CD8-positive, alpha-beta T cell (primary cell): ENCODE measurements at regions of chr6 and their contacts with region 1.

Region 1: GRCh38 chr6:33430991-33431879 is 11.4 kb downstream of the SYNGAP1 start:
- DNase-seq: peak; percentile 77 to 93 (median 88)
- ATAC-seq: peak; percentile 59
- H3K4me3 ChIP-seq: peak overlapping the region; percentile 38 to 53
- H3K4me3 Mint-ChIP-seq: peak overlapping the region; percentile 93
- H3K27ac ChIP-seq: peak overlapping the region; percentile 53 to 81
- H3K27ac Mint-ChIP-seq: peak overlapping the region; percentile 94
- H3K4me1 ChIP-seq: peaks cover 56% of the 10 kb centered on the region
- H3K4me1 Mint-ChIP-seq: peaks cover 64% of the 10 kb centered on the region
- H3K27me3 ChIP-seq: no peaks in the 10 kb centered on the region
- H3K27me3 Mint-ChIP-seq: no peaks in the 10 kb centered on the region
- CTCF ChIP-seq: no peak

Region 2: DNA sequence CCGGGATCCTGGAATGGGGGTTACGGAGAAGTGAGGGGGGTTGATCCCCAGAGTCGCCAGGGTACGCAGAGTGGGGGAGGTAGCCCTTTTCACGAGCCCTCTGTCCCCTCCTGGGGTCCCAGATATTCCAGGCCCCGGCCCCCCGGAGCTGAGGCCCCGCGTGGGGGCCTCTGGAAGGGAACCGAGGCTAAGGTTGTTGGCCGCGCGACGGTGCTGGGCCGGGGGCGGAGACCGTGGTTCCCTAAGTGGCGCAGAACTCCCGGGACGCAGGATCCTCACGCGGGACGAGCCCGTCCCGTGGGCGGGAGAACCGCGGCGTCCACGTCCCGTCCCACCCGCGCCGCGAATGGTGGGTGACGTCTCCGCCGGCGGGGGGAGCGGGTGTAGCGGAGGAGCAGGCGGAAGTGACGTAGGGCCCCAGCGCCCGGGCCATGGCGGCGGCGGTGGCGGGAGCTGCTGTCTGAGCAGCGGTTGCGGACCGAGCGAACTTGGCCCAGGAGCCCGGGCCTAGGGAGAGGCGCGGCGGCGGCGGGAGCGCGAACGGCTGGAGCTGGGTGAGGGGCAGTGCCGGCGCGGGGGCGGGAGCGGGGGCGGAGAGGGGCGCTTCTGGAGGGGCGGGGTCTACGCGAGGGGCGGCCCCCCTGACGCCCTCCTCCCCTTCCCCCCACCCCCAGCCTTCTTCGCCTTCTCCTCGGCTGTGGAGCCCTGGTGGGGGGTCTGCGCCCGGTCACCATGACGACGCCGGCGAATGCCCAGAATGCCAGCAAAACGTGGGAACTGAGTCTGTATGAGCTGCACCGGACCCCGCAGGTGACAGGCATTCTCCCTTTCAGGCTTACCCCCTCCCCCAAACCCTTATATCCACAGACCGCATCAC is 222.9 kb before region 1 on chr6 and contains the start of gene RING1:
- CTCF ChIA-PET with region 1: no interaction called
- POLR2A ChIA-PET with region 1: no interaction called
- intact Hi-C with region 1: no loop called
- DNase-seq: peak; percentile 72 to 94 (median 87)
- ATAC-seq: peak; percentile 59
- H3K4me3 ChIP-seq: peak within 1 kb of the TSS; percentile 96 to 97
- H3K4me3 Mint-ChIP-seq: peak within 1 kb of the TSS; percentile 94
- H3K27ac ChIP-seq: peak within 1 kb of the TSS; percentile 91 to 98
- H3K27ac Mint-ChIP-seq: peak within 1 kb of the TSS; percentile 96
- H3K4me1 ChIP-seq: peaks cover 51% of the 10 kb centered on the region
- H3K4me1 Mint-ChIP-seq: peaks cover 57% of the 10 kb centered on the region
- H3K27me3 ChIP-seq: peaks cover 0 to 6% of the 10 kb centered on the region in 2 experiments
- H3K27me3 Mint-ChIP-seq: no peaks in the 10 kb centered on the region
- CTCF ChIP-seq: no peak
- total RNA-seq, gene RING1: 29.1 to 29.5 TPM

Region 3: DNA sequence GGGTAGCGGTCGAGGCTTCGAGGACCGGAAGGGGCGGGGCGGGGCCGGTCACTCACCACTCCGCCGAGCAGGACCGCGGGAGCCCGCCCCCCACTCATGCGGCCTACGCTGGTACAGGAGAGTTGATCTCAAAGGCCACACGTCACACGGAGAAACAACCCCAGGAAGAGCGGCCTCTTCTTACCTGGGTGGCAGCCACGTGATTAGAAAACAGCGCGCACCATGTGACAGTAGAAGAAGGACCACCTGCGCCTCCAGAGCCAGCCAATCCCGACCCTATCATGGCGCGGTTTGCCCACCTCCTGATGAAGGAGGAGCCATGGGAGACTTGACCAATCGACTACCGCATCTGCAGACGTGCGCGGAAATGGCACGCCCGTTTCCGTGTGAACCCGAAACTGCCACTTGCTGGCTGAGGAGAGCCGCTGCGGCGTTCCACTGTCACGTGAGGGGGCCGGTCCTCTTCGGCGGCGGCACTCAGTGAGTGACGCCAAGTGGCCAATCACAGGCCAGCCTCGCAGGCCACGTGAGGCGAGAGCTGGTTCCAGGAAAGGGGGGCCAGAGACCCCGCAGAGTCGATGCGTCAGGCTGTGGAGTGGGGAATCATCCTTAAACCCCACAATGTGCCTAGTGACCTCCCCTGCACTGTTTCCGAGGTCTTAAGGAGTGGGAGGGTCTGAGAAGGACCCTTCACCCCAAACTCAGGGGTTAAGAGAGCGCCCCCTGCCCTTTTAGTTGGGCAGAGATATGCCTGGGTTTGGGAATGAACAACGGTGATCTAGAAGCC is 13.1 kb before region 1 on chr6 and contains the start of gene CUTA:
- CTCF ChIA-PET with region 1: interaction called, 6 read pairs
- POLR2A ChIA-PET with region 1: interaction called, 13 read pairs
- intact Hi-C with region 1: loop called (anchors 1 kb)
- DNase-seq: peak; percentile 96 to 100 (median 99)
- ATAC-seq: peak; percentile 87
- H3K4me3 ChIP-seq: peak within 1 kb of the TSS; percentile 68 to 70
- H3K4me3 Mint-ChIP-seq: peak within 1 kb of the TSS; percentile 94
- H3K27ac ChIP-seq: peak within 1 kb of the TSS; percentile 83 to 88
- H3K27ac Mint-ChIP-seq: peak within 1 kb of the TSS; percentile 97
- H3K4me1 ChIP-seq: peaks cover 68% of the 10 kb centered on the region
- H3K4me1 Mint-ChIP-seq: peaks cover 83% of the 10 kb centered on the region
- H3K27me3 ChIP-seq: no peaks in the 10 kb centered on the region
- H3K27me3 Mint-ChIP-seq: no peaks in the 10 kb centered on the region
- CTCF ChIP-seq: peak; percentile 27
- total RNA-seq, gene CUTA: 159 to 177 TPM

Region 4: GRCh38 chr6:33547499-33547898 is 116.3 kb after region 1 on chr6:
- CTCF ChIA-PET with region 1: no interaction called
- POLR2A ChIA-PET with region 1: no interaction called
- intact Hi-C with region 1: no loop called
- DNase-seq: no peak
- ATAC-seq: no peak
- H3K4me3 ChIP-seq: no peak overlapping the region
- H3K4me3 Mint-ChIP-seq: peak overlapping the region; percentile 3
- H3K27ac ChIP-seq: no peak overlapping the region
- H3K27ac Mint-ChIP-seq: peak overlapping the region; percentile 13
- H3K4me1 ChIP-seq: peaks cover 14% of the 10 kb centered on the region
- H3K4me1 Mint-ChIP-seq: peaks cover 18% of the 10 kb centered on the region
- H3K27me3 ChIP-seq: no peaks in the 10 kb centered on the region
- H3K27me3 Mint-ChIP-seq: no peaks in the 10 kb centered on the region
- CTCF ChIP-seq: no peak